Natural killer cell (primary cell): ENCODE measurements at regions of chr15 and their contacts with region 1.

Region 1: GRCh38 chr15:72155635-72156616 is 37.7 kb downstream of the SENP8 start:
- DNase-seq: peak; percentile 70 to 87
- ATAC-seq: peak; percentile 77 to 95 (median 80)
- H3K4me3 ChIP-seq: peak overlapping the region; percentile 27
- H3K4me3 Mint-ChIP-seq: peak overlapping the region; percentile 85
- H3K27ac ChIP-seq: no peak overlapping the region
- H3K27ac Mint-ChIP-seq: peak overlapping the region in 1 of 2 donors; percentile 76
- H3K4me1 ChIP-seq: peaks cover 6% of the 10 kb centered on the region
- H3K4me1 Mint-ChIP-seq: peaks cover 6 to 10% of the 10 kb centered on the region in 2 donors
- H3K27me3 ChIP-seq: no peaks in the 10 kb centered on the region
- H3K27me3 Mint-ChIP-seq: no peaks in the 10 kb centered on the region
- CTCF ChIP-seq: peak; percentile 89

Region 2: DNA sequence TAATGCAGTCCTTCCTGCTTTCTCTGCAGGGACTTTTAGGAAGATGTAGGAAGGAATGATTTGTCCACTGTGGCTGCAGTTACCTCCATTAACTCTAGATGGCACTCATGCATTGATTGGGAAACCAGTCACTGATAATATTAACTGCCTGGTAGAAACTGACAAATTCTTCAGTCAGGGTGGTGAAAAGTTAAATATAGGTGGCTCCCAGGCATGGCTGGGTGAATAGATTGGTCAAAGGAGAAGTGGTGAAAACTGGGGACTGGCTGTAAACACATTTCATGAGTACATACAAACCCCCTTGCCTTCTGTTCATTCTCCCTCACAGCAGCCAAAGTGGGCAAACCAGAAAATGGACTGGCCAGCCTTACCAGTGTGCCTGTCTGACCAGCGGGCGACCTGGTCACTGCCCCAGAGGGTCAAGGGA is 707.2 kb before region 1 on chr15:
- intact Hi-C with region 1: loop called (anchors 5 kb)
- DNase-seq: peak in 1 of 2 donors; percentile 19
- ATAC-seq: no peak
- H3K4me3 ChIP-seq: no peak overlapping the region
- H3K4me3 Mint-ChIP-seq: no peak overlapping the region
- H3K27ac ChIP-seq: no peak overlapping the region
- H3K27ac Mint-ChIP-seq: no peak overlapping the region
- H3K4me1 ChIP-seq: no peaks in the 10 kb centered on the region
- H3K4me1 Mint-ChIP-seq: no peaks in the 10 kb centered on the region
- H3K27me3 ChIP-seq: no peaks in the 10 kb centered on the region
- H3K27me3 Mint-ChIP-seq: peaks cover 0 to 5% of the 10 kb centered on the region in 2 donors
- CTCF ChIP-seq: peak; percentile 61

Region 3: DNA sequence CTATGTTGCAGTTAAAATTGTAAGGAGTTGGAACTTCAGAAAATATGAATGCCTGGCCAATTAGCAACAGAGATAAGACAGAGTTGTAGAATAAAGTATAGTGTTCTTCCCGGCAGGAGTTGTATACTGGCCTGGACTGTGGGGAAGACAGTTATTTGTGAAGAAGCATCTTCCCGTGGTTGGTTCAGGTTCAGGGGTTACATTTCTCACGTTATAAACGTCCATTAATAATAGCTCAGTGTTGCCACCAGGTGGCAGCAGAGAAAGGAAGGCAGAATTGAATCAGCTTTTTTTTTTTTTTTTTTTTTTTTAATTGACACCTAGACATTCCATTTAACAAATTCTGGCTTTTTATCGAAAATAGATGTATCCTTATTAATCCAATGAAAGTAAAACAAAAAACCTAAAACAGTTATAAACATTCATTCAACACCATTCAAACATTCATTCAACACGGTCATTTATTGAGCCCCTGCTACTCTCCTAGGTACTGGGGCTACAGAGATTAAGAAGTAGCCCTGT is 412.0 kb before region 1 on chr15:
- intact Hi-C with region 1: loop called (anchors 1 kb)
- DNase-seq: peak in 1 of 2 donors; percentile 78
- ATAC-seq: peak in 2 of 3 donors; percentile 42 to 60
- H3K4me3 ChIP-seq: no peak overlapping the region
- H3K4me3 Mint-ChIP-seq: no peak overlapping the region
- H3K27ac ChIP-seq: no peak overlapping the region
- H3K27ac Mint-ChIP-seq: no peak overlapping the region
- H3K4me1 ChIP-seq: no peaks in the 10 kb centered on the region
- H3K4me1 Mint-ChIP-seq: no peaks in the 10 kb centered on the region
- H3K27me3 ChIP-seq: no peaks in the 10 kb centered on the region
- H3K27me3 Mint-ChIP-seq: peaks cover 9 to 10% of the 10 kb centered on the region in 2 donors
- CTCF ChIP-seq: peak; percentile 84

Region 4: DNA sequence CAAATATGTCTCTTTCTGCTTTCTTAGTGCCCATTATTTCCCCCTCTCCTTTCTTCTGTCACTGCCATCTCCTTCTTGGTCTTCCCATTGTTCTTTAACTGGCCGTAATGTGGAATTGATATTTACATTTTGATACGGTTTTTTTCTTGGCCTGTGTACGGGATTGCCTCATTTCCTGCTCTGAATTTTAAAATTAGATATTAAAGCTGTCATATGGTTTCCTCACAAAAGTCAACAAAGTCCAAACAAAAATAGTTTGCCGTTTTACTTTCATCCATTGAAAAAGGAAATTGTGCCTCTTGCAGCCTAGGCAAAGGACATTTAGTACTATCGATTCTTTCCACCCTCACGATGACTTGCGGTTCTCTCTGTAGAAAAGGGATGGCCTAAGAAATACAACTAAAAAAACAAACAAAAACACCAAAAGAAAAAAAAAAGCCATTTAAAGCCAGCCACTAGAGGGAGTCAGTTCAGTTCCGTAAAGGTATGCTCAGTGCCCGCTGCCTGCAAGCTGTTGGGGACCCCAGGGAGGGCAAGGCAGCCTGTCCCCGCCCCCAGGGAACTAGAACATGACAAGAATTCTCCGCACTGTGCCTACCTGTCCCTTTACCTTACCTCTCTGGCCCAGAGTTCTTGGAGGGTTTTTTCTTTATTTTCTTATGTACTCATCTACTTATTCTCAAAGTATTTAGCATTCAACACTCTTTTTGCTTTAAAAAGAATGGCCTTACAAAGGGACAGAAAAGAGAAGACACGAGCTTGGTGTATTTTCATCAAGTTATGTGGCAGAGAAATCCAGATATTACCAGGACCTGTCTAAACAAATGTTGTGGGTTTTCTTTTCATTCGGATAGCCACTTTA is 375.6 kb before region 1 on chr15:
- intact Hi-C with region 1: loop called (anchors 1 kb)
- DNase-seq: peak in 1 of 2 donors; percentile 66
- ATAC-seq: peak in 1 of 3 donors; percentile 54
- H3K4me3 ChIP-seq: no peak overlapping the region
- H3K4me3 Mint-ChIP-seq: no peak overlapping the region
- H3K27ac ChIP-seq: no peak overlapping the region
- H3K27ac Mint-ChIP-seq: no peak overlapping the region
- H3K4me1 ChIP-seq: no peaks in the 10 kb centered on the region
- H3K4me1 Mint-ChIP-seq: peaks cover 0 to 7% of the 10 kb centered on the region in 2 donors
- H3K27me3 ChIP-seq: no peaks in the 10 kb centered on the region
- H3K27me3 Mint-ChIP-seq: peaks cover 3 to 17% of the 10 kb centered on the region in 2 donors
- CTCF ChIP-seq: peak; percentile 67

Region 5: DNA sequence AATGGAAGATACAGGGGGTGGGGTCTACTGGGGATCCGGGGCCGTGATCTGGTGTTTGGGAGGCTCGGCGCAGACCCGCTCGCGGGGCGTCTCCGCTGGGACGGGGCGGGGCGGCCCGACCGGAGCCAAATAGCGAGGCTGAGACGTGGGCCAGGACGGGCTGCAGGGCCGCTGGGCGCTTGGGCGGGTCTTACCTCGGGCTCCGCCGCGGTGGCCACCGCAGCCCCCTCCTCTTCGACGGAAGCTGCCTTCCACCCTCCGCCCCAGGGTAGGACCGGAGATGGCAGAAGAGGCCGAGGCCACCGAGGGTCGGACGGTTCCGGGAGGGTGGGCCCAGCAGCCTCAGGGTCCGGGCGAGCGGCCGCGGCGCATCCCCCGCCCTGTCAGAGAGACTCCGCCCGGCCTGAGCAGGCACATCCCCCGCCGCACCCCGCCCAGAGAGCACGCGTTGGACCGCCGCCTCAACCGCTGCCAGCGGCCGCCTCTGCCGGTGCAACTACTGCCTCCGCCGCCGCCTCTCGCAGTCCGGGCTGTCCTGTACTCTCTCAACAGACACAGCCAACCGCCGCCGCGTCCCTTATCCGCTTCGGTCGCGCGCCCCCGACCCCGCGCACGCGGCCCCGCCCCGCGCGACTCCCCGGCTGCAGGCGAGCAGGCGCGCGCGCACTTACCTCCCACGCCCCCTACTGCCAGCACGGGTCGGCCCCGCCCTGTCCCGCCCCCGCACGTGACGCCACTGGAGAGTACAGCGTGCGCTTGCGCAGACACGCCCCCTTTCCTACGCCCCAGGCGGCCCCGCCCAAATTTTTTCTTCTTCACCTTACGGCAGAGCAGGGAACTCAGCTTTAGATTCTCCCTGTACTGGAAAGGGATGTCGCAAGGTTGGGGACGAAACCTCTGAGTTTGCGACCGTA is 38.2 kb before region 1 on chr15 and contains the start of gene MYO9A:
- intact Hi-C with region 1: no loop called
- DNase-seq: peak; percentile 93 to 99
- ATAC-seq: peak; percentile 80 to 94 (median 81)
- H3K4me3 ChIP-seq: peak within 1 kb of the TSS; percentile 80
- H3K4me3 Mint-ChIP-seq: peak within 1 kb of the TSS; percentile 96
- H3K27ac ChIP-seq: peak within 1 kb of the TSS; percentile 83
- H3K27ac Mint-ChIP-seq: peak within 1 kb of the TSS; percentile 93 to 96
- H3K4me1 ChIP-seq: peaks cover 14% of the 10 kb centered on the region
- H3K4me1 Mint-ChIP-seq: peaks cover 26 to 32% of the 10 kb centered on the region in 2 donors
- H3K27me3 ChIP-seq: no peaks in the 10 kb centered on the region
- H3K27me3 Mint-ChIP-seq: no peaks in the 10 kb centered on the region
- CTCF ChIP-seq: no peak
- total RNA-seq, gene MYO9A: 36.3 to 40.4 (median 37.3) TPM